AG04449 (cell line): ENCODE measurements at regions of chr3 and their contacts with region 1.

Region 1: GRCh38 chr3:132535575-132536441 is 61.3 kb upstream of the ACKR4 start:
- DNase-seq: peak; percentile 56
- H3K4me3 ChIP-seq: no peak overlapping the region
- CTCF ChIP-seq: peak; percentile 41

Region 2: GRCh38 chr3:132294906-132295305 is 240.9 kb before region 1 on chr3:
- CTCF ChIA-PET with region 1: no interaction called
- POLR2A ChIA-PET with region 1: no interaction called
- DNase-seq: no peak
- H3K4me3 ChIP-seq: no peak overlapping the region
- CTCF ChIP-seq: no peak

Region 3: GRCh38 chr3:132486086-132486485 is 49.7 kb before region 1 on chr3:
- CTCF ChIA-PET with region 1: interaction called, 13 read pairs
- POLR2A ChIA-PET with region 1: no interaction called
- DNase-seq: no peak
- H3K4me3 ChIP-seq: no peak overlapping the region
- CTCF ChIP-seq: no peak

Region 4: DNA sequence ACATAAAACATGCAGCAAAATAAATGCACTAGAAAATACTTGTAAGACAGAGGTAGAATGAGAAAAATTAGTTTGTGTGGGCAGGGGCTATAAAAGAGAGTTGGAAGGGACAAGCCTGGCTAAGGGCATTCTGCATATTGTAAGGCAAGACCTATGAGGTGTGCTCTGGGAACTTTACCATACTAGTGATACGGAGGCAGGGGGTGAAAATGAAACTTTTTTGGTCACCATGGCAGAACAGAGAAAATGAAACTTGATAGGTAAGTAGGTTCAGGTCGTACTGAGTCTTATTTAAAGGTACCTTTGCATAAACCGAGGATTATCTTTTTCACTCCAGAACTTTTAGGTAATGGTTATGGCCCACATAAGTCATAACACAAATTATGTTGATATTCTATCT is 13.5 kb before region 1 on chr3:
- CTCF ChIA-PET with region 1: interaction called, 59 read pairs
- POLR2A ChIA-PET with region 1: no interaction called
- DNase-seq: no peak
- H3K4me3 ChIP-seq: no peak overlapping the region
- CTCF ChIP-seq: no peak

Region 5: DNA sequence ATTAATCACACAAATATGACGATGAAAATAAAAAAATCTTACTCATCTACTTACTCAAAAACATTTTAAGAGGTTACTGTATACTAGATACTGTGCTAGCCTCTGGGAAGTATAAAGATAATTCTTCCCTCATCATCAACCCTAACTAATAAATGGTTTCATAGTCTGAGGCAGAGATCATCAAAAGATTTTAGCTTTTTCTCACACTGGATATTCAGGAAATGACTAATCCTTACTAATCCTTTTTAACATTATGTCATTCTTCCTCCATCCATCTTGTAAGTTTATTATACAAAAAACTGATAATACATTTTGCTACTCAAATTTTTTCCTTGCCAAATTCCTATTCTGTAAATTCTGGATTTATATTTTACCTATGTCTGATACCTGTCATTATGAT is 94.1 kb after region 1 on chr3:
- CTCF ChIA-PET with region 1: interaction called, 33 read pairs
- POLR2A ChIA-PET with region 1: no interaction called
- DNase-seq: no peak
- H3K4me3 ChIP-seq: no peak overlapping the region
- CTCF ChIP-seq: no peak

Region 6: GRCh38 chr3:132641837-132642538 is 106.2 kb after region 1 on chr3:
- CTCF ChIA-PET with region 1: interaction called, 524 read pairs
- POLR2A ChIA-PET with region 1: no interaction called
- DNase-seq: no peak
- H3K4me3 ChIP-seq: no peak overlapping the region
- CTCF ChIP-seq: peak; percentile 41

Region 7: GRCh38 chr3:132659365-132660051 is 123.7 kb after region 1 on chr3 and contains the start of gene ACAD11:
- CTCF ChIA-PET with region 1: interaction called, 58 read pairs
- POLR2A ChIA-PET with region 1: no interaction called
- DNase-seq: no peak
- H3K4me3 ChIP-seq: peak within 1 kb of the TSS; percentile 80
- CTCF ChIP-seq: peak; percentile 73

Region 8: DNA sequence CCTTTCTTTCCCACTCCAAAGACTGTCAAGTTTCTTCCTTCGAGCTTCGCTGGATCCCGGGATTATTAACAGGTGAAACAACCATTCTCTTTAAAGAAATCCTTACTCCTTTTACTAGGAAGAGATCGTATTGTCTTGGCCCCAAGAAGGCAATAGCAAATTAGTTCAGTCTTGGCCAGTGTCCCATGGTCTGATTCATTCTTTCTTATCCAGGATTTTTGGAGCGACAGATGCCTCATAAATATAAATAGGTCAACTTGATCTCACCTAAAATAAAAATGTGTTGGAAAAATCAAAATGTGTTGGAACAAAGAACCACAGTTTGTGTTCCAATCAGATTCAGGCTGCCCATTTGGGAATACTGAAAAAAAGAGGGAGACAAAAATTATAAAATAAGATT is 362.3 kb after region 1 on chr3:
- CTCF ChIA-PET with region 1: no interaction called
- POLR2A ChIA-PET with region 1: no interaction called
- DNase-seq: no peak
- H3K4me3 ChIP-seq: no peak overlapping the region
- CTCF ChIP-seq: no peak